CD4-positive, alpha-beta memory T cell (primary cell): ENCODE measurements at regions of chr9 and their contacts with region 1.

Region 1: DNA sequence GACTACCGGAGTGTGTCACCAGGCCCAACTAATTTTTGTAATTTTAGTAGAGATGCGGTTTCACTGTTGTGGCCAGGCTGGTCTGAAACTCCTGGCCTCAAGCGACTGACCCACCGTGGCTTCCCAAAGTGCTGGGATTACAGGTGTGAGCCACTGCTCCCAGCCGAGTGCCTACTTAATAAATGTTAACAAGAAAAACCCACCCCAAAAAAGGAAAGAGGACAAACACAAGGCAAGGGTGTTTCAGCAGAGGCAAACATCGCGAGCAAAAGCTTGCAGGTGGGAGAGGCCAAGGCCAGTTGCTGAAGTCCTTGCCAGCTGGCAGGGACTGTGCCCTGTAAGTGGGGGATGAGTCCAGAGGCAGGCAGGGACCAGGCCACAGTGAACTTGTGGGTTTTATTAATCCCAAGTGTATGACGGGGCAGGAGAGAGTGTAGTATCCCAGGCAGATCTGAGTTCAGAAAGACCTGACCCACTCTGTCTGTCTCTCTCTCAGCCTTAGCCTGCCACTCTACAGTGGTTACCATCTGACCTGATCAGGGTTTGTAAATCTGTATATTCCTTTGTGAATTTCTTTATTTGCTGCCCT is 6.4 kb upstream of the FPGS start:
- DNase-seq: no peak
- H3K4me3 ChIP-seq: no peak overlapping the region
- H3K4me3 Mint-ChIP-seq: peak overlapping the region in 6 of 8 donors; percentile 62 to 89 (median 74)
- H3K27ac ChIP-seq: no peak overlapping the region
- H3K27ac Mint-ChIP-seq: peak overlapping the region; percentile 58 to 93 (median 87)
- H3K4me1 ChIP-seq: peaks cover 23% of the 10 kb centered on the region
- H3K4me1 Mint-ChIP-seq: peaks cover 12 to 32% (median 23%) of the 10 kb centered on the region in 4 donors
- H3K27me3 ChIP-seq: no peaks in the 10 kb centered on the region
- H3K27me3 Mint-ChIP-seq: no peaks in the 10 kb centered on the region

Region 2: DNA sequence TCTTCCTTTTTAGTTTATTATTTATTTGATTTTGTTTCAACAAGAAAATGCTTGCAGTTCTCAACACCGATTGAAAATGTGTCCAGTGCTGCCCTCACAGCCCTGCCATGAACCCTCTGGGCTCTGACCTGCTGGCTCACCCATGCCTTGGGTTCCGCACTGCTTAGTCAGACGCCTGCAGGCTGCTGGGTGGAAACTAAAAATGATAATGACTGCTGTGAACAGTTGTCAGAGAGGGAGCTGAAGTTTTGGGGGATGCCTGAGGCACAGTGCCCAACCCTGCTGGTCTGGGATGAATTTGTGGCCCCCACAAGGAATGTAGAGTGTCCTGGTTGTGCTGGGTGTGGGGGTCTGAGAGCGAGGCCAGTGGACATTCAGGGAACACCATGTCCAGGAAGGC is 111.7 kb before region 1 on chr9:
- CTCF ChIA-PET with region 1: no interaction called
- POLR2A ChIA-PET with region 1: no interaction called
- intact Hi-C with region 1: no loop called
- DNase-seq: no peak
- H3K4me3 ChIP-seq: no peak overlapping the region
- H3K4me3 Mint-ChIP-seq: no peak overlapping the region
- H3K27ac ChIP-seq: no peak overlapping the region
- H3K27ac Mint-ChIP-seq: no peak overlapping the region
- H3K4me1 ChIP-seq: no peaks in the 10 kb centered on the region
- H3K4me1 Mint-ChIP-seq: no peaks in the 10 kb centered on the region
- H3K27me3 ChIP-seq: no peaks in the 10 kb centered on the region
- H3K27me3 Mint-ChIP-seq: no peaks in the 10 kb centered on the region

Region 3: GRCh38 chr9:127770905-127771569 is 25.3 kb before region 1 on chr9:
- CTCF ChIA-PET with region 1: no interaction called
- POLR2A ChIA-PET with region 1: interaction called, 14 read pairs
- intact Hi-C with region 1: no loop called
- DNase-seq: peak; percentile 92 to 96 (median 95)
- H3K4me3 ChIP-seq: peak overlapping the region; percentile 50 to 78
- H3K4me3 Mint-ChIP-seq: peak overlapping the region; percentile 78 to 92 (median 88)
- H3K27ac ChIP-seq: peak overlapping the region; percentile 97
- H3K27ac Mint-ChIP-seq: peak overlapping the region; percentile 92 to 99 (median 98)
- H3K4me1 ChIP-seq: peaks cover 91% of the 10 kb centered on the region
- H3K4me1 Mint-ChIP-seq: peaks cover 41 to 78% (median 61%) of the 10 kb centered on the region in 4 donors
- H3K27me3 ChIP-seq: no peaks in the 10 kb centered on the region
- H3K27me3 Mint-ChIP-seq: no peaks in the 10 kb centered on the region